Naive thymus-derived CD4-positive, alpha-beta T cell (primary cell): ENCODE measurements at regions of chr21 and their contacts with region 1.

Region 1: GRCh38 chr21:37563641-37564340 is 197.2 kb downstream of the DYRK1A start:
- DNase-seq: peak; percentile 86 to 94 (median 91)
- ATAC-seq: peak; percentile 93
- H3K4me3 ChIP-seq: peak overlapping the region; percentile 99
- H3K4me3 Mint-ChIP-seq: peak overlapping the region; percentile 93 to 100 (median 97)
- H3K27ac ChIP-seq: peak overlapping the region; percentile 82
- H3K27ac Mint-ChIP-seq: peak overlapping the region; percentile 97 to 100 (median 99)
- H3K4me1 ChIP-seq: peaks cover 11 to 17% of the 10 kb centered on the region in 2 donors
- H3K4me1 Mint-ChIP-seq: peaks cover 0 to 32% (median 17%) of the 10 kb centered on the region in 7 donors
- H3K27me3 ChIP-seq: no peaks in the 10 kb centered on the region
- H3K27me3 Mint-ChIP-seq: peaks cover 0 to 8% (median 2%) of the 10 kb centered on the region in 5 donors

Region 2: DNA sequence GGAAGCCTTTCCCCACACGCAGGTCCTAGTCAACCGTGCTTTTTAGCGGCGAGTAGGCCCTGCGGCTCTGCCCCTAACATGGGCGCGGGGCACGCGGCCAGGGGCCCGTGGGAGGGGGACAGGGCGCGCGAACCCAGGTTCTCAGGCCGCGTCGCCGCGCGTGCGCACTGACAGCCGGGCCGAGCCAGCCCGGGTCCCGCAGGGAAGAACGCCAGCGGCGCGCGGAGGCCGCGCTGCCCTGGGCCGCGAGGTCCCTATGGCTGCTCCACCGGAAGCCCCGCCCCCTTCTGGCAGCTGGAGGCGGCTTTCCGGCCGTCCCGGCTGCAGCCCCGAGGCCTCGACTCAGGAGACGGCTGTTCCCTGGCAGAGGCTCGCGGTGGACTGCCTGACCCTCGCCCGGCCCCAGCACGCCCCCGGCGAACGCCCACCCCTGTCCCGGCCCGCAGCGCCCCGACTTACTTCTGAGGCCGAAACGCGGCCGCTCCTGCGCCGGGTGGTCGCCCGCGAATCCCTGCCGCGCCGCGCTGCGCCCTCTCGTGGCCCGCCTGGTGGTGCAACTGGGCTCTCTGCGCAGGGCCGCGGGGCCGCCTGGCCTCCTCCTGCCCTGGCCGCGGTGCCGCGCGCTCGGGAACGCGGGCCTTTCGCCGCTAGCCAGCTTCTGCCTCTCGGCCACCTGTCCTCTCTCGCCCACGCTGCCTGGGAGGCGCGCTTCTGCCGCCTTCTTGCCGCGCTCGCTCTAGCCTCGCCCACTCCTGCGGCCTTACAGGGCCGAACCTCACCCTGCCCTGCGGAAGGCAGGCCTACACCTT is 573.9 kb before region 1 on chr21:
- CTCF ChIA-PET with region 1: no interaction called
- POLR2A ChIA-PET with region 1: no interaction called
- intact Hi-C with region 1: loop called (anchors 1 to 5 kb)
- DNase-seq: peak; percentile 63 to 95 (median 74)
- ATAC-seq: peak; percentile 90
- H3K4me3 ChIP-seq: peak overlapping the region; percentile 66
- H3K4me3 Mint-ChIP-seq: peak overlapping the region; percentile 83 to 95 (median 90)
- H3K27ac ChIP-seq: peak overlapping the region; percentile 69
- H3K27ac Mint-ChIP-seq: peak overlapping the region; percentile 71 to 94 (median 87)
- H3K4me1 ChIP-seq: peaks cover 0 to 4% of the 10 kb centered on the region in 2 donors
- H3K4me1 Mint-ChIP-seq: peaks cover 4 to 36% (median 28%) of the 10 kb centered on the region in 7 donors
- H3K27me3 ChIP-seq: no peaks in the 10 kb centered on the region
- H3K27me3 Mint-ChIP-seq: peaks cover 0 to 3% (median 0%) of the 10 kb centered on the region in 5 donors

Region 3: GRCh38 chr21:37267269-37268184 is 296.3 kb before region 1 on chr21 and contains the start of gene VPS26C:
- CTCF ChIA-PET with region 1: no interaction called
- POLR2A ChIA-PET with region 1: interaction called, 17 read pairs
- intact Hi-C with region 1: loop called (anchors 1 kb)
- DNase-seq: peak; percentile 91 to 98 (median 97)
- ATAC-seq: peak; percentile 93
- H3K4me3 ChIP-seq: peak within 1 kb of the TSS; percentile 95
- H3K4me3 Mint-ChIP-seq: peak within 1 kb of the TSS; percentile 88 to 96 (median 94)
- H3K27ac ChIP-seq: peak within 1 kb of the TSS; percentile 90
- H3K27ac Mint-ChIP-seq: peak within 1 kb of the TSS; percentile 94 to 99 (median 98)
- H3K4me1 ChIP-seq: peaks cover 5 to 7% of the 10 kb centered on the region in 2 donors
- H3K4me1 Mint-ChIP-seq: peaks cover 14 to 62% (median 46%) of the 10 kb centered on the region in 7 donors
- H3K27me3 ChIP-seq: no peaks in the 10 kb centered on the region
- H3K27me3 Mint-ChIP-seq: peaks cover 0 to 11% (median 0%) of the 10 kb centered on the region in 5 donors
- total RNA-seq, gene VPS26C: 46.8 to 83.5 (median 77.7) TPM

Region 4: GRCh38 chr21:37509802-37510393 is 53.9 kb before region 1 on chr21:
- CTCF ChIA-PET with region 1: no interaction called
- POLR2A ChIA-PET with region 1: no interaction called
- intact Hi-C with region 1: loop called (anchors 2 to 5 kb)
- DNase-seq: no peak
- ATAC-seq: no peak
- H3K4me3 ChIP-seq: no peak overlapping the region
- H3K4me3 Mint-ChIP-seq: no peak overlapping the region
- H3K27ac ChIP-seq: no peak overlapping the region
- H3K27ac Mint-ChIP-seq: peak overlapping the region in 3 of 9 donors; percentile 39 to 74 (median 43)
- H3K4me1 ChIP-seq: no peaks in the 10 kb centered on the region
- H3K4me1 Mint-ChIP-seq: peaks cover 0 to 21% (median 11%) of the 10 kb centered on the region in 7 donors
- H3K27me3 ChIP-seq: no peaks in the 10 kb centered on the region
- H3K27me3 Mint-ChIP-seq: no peaks in the 10 kb centered on the region

Region 5: DNA sequence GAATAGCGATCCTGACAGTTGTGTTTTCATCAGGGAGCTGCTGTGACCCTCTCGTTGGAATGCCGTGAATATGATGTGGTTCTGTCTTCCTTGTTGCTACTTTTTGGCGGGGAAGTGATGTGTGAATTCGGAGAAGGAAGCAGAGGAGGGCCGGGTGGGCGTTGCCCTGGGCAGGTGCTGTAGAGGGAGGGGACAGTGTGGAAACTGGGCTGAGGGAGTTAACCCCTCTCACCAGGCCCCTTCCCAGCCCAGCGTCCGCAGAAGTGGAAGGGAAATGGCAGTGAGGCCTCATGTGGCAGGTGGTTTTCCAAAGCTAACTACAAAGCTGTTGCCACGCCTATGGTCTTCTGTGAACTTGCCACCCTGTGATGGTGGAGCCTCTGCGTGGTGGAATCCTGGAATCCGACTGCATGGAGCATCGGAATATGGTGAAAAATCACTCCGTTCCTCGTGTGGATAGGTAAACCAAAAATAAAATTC is 30.7 kb after region 1 on chr21:
- CTCF ChIA-PET with region 1: no interaction called
- POLR2A ChIA-PET with region 1: no interaction called
- intact Hi-C with region 1: no loop called
- DNase-seq: no peak
- ATAC-seq: no peak
- H3K4me3 ChIP-seq: no peak overlapping the region
- H3K4me3 Mint-ChIP-seq: no peak overlapping the region
- H3K27ac ChIP-seq: no peak overlapping the region
- H3K27ac Mint-ChIP-seq: no peak overlapping the region
- H3K4me1 ChIP-seq: no peaks in the 10 kb centered on the region
- H3K4me1 Mint-ChIP-seq: no peaks in the 10 kb centered on the region
- H3K27me3 ChIP-seq: no peaks in the 10 kb centered on the region
- H3K27me3 Mint-ChIP-seq: peaks cover 0 to 17% (median 4%) of the 10 kb centered on the region in 5 donors

Region 6: DNA sequence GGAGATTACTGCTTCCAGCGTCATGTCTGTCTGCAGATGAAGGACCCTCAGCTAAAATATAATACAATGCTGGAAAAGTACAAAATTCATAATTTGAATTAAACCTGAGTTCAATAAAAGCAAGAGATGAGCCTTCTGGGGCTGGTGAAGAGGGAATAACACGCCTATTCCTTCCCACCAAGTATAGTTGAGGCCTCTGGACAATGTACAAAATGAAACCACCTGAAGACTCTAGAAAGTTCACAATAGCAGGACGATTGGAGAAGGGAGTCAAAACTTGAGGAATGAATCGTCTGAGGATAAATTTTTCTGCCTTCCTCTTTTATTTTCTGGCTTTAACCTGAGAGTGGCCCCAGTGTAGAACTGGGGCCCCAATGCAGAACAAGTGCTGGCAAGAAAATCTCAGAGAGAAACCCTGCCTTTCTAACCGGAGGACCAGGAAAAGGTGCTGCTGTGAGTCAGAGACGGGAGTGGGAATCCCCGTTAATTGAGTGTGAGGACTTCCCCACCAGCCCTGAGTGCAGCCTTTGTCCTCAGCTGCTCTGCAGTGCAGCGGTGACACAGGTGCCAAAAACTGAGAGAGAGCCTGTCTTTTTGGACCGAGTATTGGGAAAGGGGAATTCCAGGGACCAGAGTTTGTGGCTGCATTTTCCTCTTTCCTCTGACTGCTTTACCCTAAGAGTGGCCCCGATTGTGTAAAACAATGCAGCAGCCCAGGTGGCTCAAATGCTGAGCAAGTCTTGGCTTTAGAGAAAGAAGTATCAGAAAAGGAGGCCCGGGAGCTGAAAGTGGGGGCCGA is 67.7 kb after region 1 on chr21:
- CTCF ChIA-PET with region 1: no interaction called
- POLR2A ChIA-PET with region 1: no interaction called
- intact Hi-C with region 1: no loop called
- DNase-seq: no peak
- ATAC-seq: no peak
- H3K4me3 ChIP-seq: no peak overlapping the region
- H3K4me3 Mint-ChIP-seq: no peak overlapping the region
- H3K27ac ChIP-seq: no peak overlapping the region
- H3K27ac Mint-ChIP-seq: no peak overlapping the region
- H3K4me1 ChIP-seq: no peaks in the 10 kb centered on the region
- H3K4me1 Mint-ChIP-seq: no peaks in the 10 kb centered on the region
- H3K27me3 ChIP-seq: peaks cover 0 to 5% of the 10 kb centered on the region in 2 donors
- H3K27me3 Mint-ChIP-seq: peaks cover 21 to 49% (median 36%) of the 10 kb centered on the region in 5 donors

Region 7: DNA sequence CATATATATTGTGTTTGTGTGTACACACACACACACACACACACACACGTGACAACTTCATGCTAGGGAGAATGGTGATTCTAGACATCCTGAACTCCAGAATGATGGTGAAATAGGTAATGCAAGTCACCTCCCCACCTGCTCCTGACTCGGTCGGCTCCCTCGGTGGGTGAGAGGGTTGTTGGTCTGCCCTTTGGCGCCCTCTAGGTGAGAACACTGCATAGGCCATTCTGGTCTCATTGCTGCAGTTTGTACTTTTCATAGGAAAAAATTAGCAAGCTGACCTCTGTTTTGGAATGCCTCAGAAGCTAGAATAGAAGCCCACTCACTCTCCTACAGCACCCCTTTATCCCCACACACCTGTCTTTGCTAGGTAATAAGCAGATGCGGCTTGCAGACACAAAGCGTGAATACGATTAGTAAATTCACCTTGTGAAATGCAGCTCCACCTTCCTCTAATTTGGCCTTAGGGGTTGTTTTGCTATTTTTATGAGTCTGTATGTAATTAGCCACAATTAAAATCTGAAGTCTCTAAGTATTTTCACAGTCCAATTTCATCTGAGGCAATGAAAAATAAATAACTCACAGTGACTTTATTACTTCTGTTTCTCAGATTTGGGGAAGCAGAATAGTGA is 563.0 kb after region 1 on chr21:
- CTCF ChIA-PET with region 1: no interaction called
- POLR2A ChIA-PET with region 1: no interaction called
- intact Hi-C with region 1: loop called in 1 of 2 experiments (anchors 1 kb)
- DNase-seq: peak in 8 of 9 donors; percentile 11 to 49 (median 25)
- ATAC-seq: peak; percentile 57
- H3K4me3 ChIP-seq: no peak overlapping the region
- H3K4me3 Mint-ChIP-seq: no peak overlapping the region
- H3K27ac ChIP-seq: no peak overlapping the region
- H3K27ac Mint-ChIP-seq: no peak overlapping the region
- H3K4me1 ChIP-seq: no peaks in the 10 kb centered on the region
- H3K4me1 Mint-ChIP-seq: peaks cover 0 to 2% (median 0%) of the 10 kb centered on the region in 7 donors
- H3K27me3 ChIP-seq: no peaks in the 10 kb centered on the region
- H3K27me3 Mint-ChIP-seq: peaks cover 10 to 25% (median 17%) of the 10 kb centered on the region in 5 donors

Region 8: GRCh38 chr21:39313571-39314142 is 1749.9 kb after region 1 on chr21 and contains the start of gene BRWD1:
- CTCF ChIA-PET with region 1: no interaction called
- POLR2A ChIA-PET with region 1: no interaction called
- intact Hi-C with region 1: loop called (anchors 5 to 10 kb)
- DNase-seq: peak; percentile 73 to 90 (median 84)
- ATAC-seq: peak; percentile 71
- H3K4me3 ChIP-seq: peak within 1 kb of the TSS; percentile 88
- H3K4me3 Mint-ChIP-seq: peak within 1 kb of the TSS; percentile 91 to 97 (median 94)
- H3K27ac ChIP-seq: peak within 1 kb of the TSS; percentile 92
- H3K27ac Mint-ChIP-seq: peak within 1 kb of the TSS; percentile 89 to 98 (median 94)
- H3K4me1 ChIP-seq: peaks cover 11% of the 10 kb centered on the region in 2 donors
- H3K4me1 Mint-ChIP-seq: peaks cover 28 to 51% (median 45%) of the 10 kb centered on the region in 7 donors
- H3K27me3 ChIP-seq: no peaks in the 10 kb centered on the region
- H3K27me3 Mint-ChIP-seq: no peaks in the 10 kb centered on the region
- total RNA-seq, gene BRWD1: 41.1 to 108 (median 83.9) TPM